Caco-2 (cell line): ENCODE measurements at regions of chr10 and their contacts with region 1.

Region 1: GRCh38 chr10:55091691-55092328 is 290.8 kb upstream of the PCDH15 start:
- DNase-seq: peak in 1 of 2 experiments; percentile 26
- H3K4me3 ChIP-seq: no peak overlapping the region
- H3K4me3 Mint-ChIP-seq: no peak overlapping the region
- H3K27ac Mint-ChIP-seq: no peak overlapping the region
- H3K4me1 ChIP-seq: no peaks in the 10 kb centered on the region
- H3K4me1 Mint-ChIP-seq: no peaks in the 10 kb centered on the region
- H3K27me3 ChIP-seq: no peaks in the 10 kb centered on the region
- H3K27me3 Mint-ChIP-seq: no peaks in the 10 kb centered on the region
- CTCF ChIP-seq: peak; percentile 87 to 93

Region 2: DNA sequence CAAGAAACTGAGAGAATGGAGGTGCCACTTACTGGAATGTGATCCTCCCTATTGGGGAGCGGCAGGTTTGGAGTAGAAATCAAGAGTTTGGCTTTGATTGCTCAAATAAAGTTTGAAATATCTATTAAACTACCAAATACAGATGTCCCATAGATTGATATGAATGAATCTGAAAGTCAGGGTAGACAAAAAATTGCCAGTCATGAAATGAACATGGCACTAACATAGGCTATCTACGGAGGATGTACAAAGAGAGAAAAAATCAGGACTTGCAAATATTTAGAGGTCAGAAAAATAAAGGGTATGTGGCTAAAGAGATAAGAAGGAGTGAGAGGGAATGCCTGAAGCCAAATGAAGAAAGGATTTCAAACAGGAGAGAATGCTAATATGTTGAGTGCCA is 410.7 kb before region 1 on chr10:
- CTCF ChIA-PET with region 1: no interaction called
- POLR2A ChIA-PET with region 1: no interaction called
- intact Hi-C with region 1: no loop called
- DNase-seq: no peak
- H3K4me3 ChIP-seq: no peak overlapping the region
- H3K4me3 Mint-ChIP-seq: no peak overlapping the region
- H3K27ac Mint-ChIP-seq: peak overlapping the region; percentile 4
- H3K4me1 ChIP-seq: peaks cover 29% of the 10 kb centered on the region
- H3K4me1 Mint-ChIP-seq: peaks cover 15% of the 10 kb centered on the region
- H3K27me3 ChIP-seq: no peaks in the 10 kb centered on the region
- H3K27me3 Mint-ChIP-seq: no peaks in the 10 kb centered on the region
- CTCF ChIP-seq: no peak

Region 3: GRCh38 chr10:55174419-55174818 is 82.6 kb after region 1 on chr10:
- CTCF ChIA-PET with region 1: no interaction called
- POLR2A ChIA-PET with region 1: no interaction called
- intact Hi-C with region 1: loop called (anchors 1 kb)
- DNase-seq: peak; percentile 48 to 60
- H3K4me3 ChIP-seq: no peak overlapping the region
- H3K4me3 Mint-ChIP-seq: no peak overlapping the region
- H3K27ac Mint-ChIP-seq: no peak overlapping the region
- H3K4me1 ChIP-seq: no peaks in the 10 kb centered on the region
- H3K4me1 Mint-ChIP-seq: no peaks in the 10 kb centered on the region
- H3K27me3 ChIP-seq: no peaks in the 10 kb centered on the region
- H3K27me3 Mint-ChIP-seq: no peaks in the 10 kb centered on the region
- CTCF ChIP-seq: peak; percentile 63 to 76

Region 4: GRCh38 chr10:55263327-55263726 is 171.5 kb after region 1 on chr10:
- CTCF ChIA-PET with region 1: interaction called, 7 read pairs
- POLR2A ChIA-PET with region 1: no interaction called
- intact Hi-C with region 1: loop called (anchors 1 kb)
- DNase-seq: no peak
- H3K4me3 ChIP-seq: no peak overlapping the region
- H3K4me3 Mint-ChIP-seq: no peak overlapping the region
- H3K27ac Mint-ChIP-seq: no peak overlapping the region
- H3K4me1 ChIP-seq: no peaks in the 10 kb centered on the region
- H3K4me1 Mint-ChIP-seq: no peaks in the 10 kb centered on the region
- H3K27me3 ChIP-seq: no peaks in the 10 kb centered on the region
- H3K27me3 Mint-ChIP-seq: peaks cover 9% of the 10 kb centered on the region
- CTCF ChIP-seq: peak in 1 of 2 experiments; percentile 0

Region 5: GRCh38 chr10:55500932-55501559 is 409.2 kb after region 1 on chr10:
- CTCF ChIA-PET with region 1: no interaction called
- POLR2A ChIA-PET with region 1: no interaction called
- intact Hi-C with region 1: loop called (anchors 1 kb)
- DNase-seq: peak; percentile 69 to 74
- H3K4me3 ChIP-seq: no peak overlapping the region
- H3K4me3 Mint-ChIP-seq: no peak overlapping the region
- H3K27ac Mint-ChIP-seq: no peak overlapping the region
- H3K4me1 ChIP-seq: no peaks in the 10 kb centered on the region
- H3K4me1 Mint-ChIP-seq: no peaks in the 10 kb centered on the region
- H3K27me3 ChIP-seq: no peaks in the 10 kb centered on the region
- H3K27me3 Mint-ChIP-seq: no peaks in the 10 kb centered on the region
- CTCF ChIP-seq: peak; percentile 77 to 82

Region 6: DNA sequence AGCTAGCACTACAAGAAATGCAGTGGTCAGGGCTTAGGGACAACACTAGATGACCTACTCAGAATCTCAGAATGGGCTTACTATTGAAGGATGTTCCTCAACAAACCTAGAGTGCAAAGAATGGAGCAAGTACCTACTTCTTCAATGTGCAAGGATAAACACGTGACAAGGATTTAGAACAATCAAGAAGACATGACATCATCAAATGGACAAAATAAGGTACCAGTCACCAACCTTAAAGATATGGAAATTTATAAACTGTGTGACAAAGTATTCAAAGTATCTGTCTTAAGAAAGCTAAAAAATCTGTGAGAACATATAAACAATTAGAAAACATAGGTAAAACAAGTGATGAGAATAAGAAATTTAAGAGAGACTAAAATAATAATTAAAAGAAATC is 613.1 kb after region 1 on chr10:
- CTCF ChIA-PET with region 1: no interaction called
- POLR2A ChIA-PET with region 1: no interaction called
- intact Hi-C with region 1: no loop called
- DNase-seq: no peak
- H3K4me3 ChIP-seq: no peak overlapping the region
- H3K4me3 Mint-ChIP-seq: no peak overlapping the region
- H3K27ac Mint-ChIP-seq: no peak overlapping the region
- H3K4me1 ChIP-seq: no peaks in the 10 kb centered on the region
- H3K4me1 Mint-ChIP-seq: no peaks in the 10 kb centered on the region
- H3K27me3 ChIP-seq: no peaks in the 10 kb centered on the region
- H3K27me3 Mint-ChIP-seq: no peaks in the 10 kb centered on the region
- CTCF ChIP-seq: no peak

Region 7: DNA sequence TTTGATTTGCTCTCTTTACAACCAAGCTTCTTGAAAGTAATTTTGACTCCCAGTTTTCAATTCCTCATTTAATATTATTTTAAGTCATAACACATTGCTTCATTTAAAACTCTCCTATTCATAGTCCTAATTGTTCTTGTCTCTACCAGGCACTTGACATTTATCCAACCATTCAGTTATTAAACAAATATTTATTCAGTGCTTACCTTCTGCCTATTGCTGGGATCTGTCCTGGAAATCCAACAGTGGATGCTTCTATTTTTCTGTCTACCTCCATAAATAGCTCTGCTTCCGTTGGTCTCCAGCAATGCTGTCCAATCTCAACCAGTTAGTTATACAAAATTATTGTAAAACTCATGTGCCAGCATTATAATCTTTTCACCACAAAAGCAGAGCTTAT is 654.2 kb after region 1 on chr10:
- CTCF ChIA-PET with region 1: no interaction called
- POLR2A ChIA-PET with region 1: no interaction called
- intact Hi-C with region 1: loop called (anchors 5 kb)
- DNase-seq: no peak
- H3K4me3 ChIP-seq: no peak overlapping the region
- H3K4me3 Mint-ChIP-seq: no peak overlapping the region
- H3K27ac Mint-ChIP-seq: no peak overlapping the region
- H3K4me1 ChIP-seq: no peaks in the 10 kb centered on the region
- H3K4me1 Mint-ChIP-seq: no peaks in the 10 kb centered on the region
- H3K27me3 ChIP-seq: no peaks in the 10 kb centered on the region
- H3K27me3 Mint-ChIP-seq: no peaks in the 10 kb centered on the region
- CTCF ChIP-seq: no peak